B cell (primary cell): ENCODE measurements at regions of chr6 and their contacts with region 1.

Region 1: GRCh38 chr6:33075568-33076405 is at the start of gene HLA-DPB1:
- DNase-seq: peak; percentile 93
- ATAC-seq: peak; percentile 81
- H3K4me3 ChIP-seq: peak within 1 kb of the TSS; percentile 79 to 99 (median 97)
- H3K4me3 Mint-ChIP-seq: peak within 1 kb of the TSS; percentile 97
- H3K27ac ChIP-seq: peak within 1 kb of the TSS; percentile 96 to 99
- H3K27ac Mint-ChIP-seq: peak within 1 kb of the TSS; percentile 98
- H3K4me1 ChIP-seq: peaks cover 48 to 50% of the 10 kb centered on the region in 2 donors
- H3K4me1 Mint-ChIP-seq: peaks cover 60% of the 10 kb centered on the region
- H3K27me3 ChIP-seq: no peaks in the 10 kb centered on the region
- H3K27me3 Mint-ChIP-seq: no peaks in the 10 kb centered on the region
- CTCF ChIP-seq: no peak
- total RNA-seq, gene HLA-DPB1: 1,068 and 1,104 TPM in 2 replicates

Region 2: DNA sequence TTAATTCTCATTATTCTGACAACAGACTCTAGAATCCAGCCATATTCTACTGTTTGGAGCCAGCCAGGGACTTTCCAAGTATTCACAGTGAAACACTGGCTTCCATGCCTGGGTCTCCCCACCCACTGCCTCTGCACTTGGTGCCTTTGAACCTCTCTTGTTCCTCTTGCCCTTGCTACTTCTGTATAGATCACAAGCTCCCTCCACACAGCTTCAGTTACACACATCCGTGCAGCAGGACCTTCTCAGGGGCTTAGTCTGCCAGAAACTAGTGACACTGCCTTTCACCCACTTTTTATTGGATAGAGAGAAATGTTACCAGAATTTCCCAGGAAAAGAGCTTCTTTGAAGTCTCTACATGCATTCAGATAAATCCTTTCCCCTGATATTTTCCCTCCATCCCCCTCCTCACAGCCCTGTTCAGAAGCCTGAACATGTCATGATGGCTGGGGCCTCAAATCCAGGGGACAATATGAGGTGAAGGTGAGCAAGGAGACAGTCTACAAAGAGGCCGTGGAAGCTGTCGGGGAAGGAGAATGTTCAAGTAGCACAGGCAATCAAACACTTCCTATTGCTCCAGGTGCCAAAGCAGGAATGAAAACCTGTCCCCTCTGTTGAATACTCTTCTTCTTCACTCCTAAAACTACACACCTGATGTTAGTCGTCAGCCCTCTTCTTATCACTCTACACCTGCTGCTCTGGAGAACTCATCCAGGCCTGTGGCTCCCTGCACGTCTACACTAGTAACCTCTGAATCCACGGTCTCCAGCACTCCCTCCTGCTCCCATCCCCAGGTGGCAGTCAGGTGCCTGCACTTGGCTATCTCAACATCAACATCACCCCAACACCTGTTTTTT is 46.2 kb before region 1 on chr6:
- CTCF ChIA-PET with region 1: interaction called, 32 read pairs
- POLR2A ChIA-PET with region 1: interaction called, 136 read pairs
- intact Hi-C with region 1: loop called (anchors 1 kb)
- DNase-seq: peak; percentile 96
- ATAC-seq: peak; percentile 75
- H3K4me3 ChIP-seq: peak overlapping the region in 4 of 5 experiments; percentile 25 to 51 (median 33)
- H3K4me3 Mint-ChIP-seq: peak overlapping the region; percentile 71
- H3K27ac ChIP-seq: peak overlapping the region; percentile 99
- H3K27ac Mint-ChIP-seq: peak overlapping the region; percentile 99
- H3K4me1 ChIP-seq: peaks cover 45 to 54% of the 10 kb centered on the region in 2 donors
- H3K4me1 Mint-ChIP-seq: peaks cover 63% of the 10 kb centered on the region
- H3K27me3 ChIP-seq: no peaks in the 10 kb centered on the region
- H3K27me3 Mint-ChIP-seq: no peaks in the 10 kb centered on the region
- CTCF ChIP-seq: no peak

Region 3: DNA sequence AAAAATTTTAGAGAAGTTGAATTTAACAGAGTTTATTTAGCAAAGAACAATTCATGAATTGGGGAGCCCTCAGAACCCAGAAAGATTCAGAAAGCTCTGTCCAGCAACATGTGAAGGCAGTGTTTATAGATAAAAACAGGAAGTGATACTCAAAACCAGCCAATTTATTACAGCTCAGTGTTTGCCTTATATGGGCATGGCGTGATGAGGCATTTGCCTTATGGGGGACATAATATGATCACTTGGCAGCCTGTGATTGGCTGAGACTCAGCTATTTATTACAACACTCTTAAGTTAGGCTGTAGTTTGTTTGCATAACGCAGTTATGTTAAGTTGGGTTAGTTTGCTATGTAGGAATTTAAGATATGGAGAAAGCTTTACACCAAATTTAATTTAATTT is 13.8 kb before region 1 on chr6:
- CTCF ChIA-PET with region 1: interaction called, 4 read pairs
- POLR2A ChIA-PET with region 1: interaction called, 22 read pairs
- intact Hi-C with region 1: loop called (anchors 1 kb)
- DNase-seq: peak; percentile 85
- ATAC-seq: peak; percentile 70
- H3K4me3 ChIP-seq: peak overlapping the region in 1 of 5 experiments; percentile 6
- H3K4me3 Mint-ChIP-seq: peak overlapping the region; percentile 1
- H3K27ac ChIP-seq: peak overlapping the region in 1 of 2 donors; percentile 70
- H3K27ac Mint-ChIP-seq: peak overlapping the region; percentile 93
- H3K4me1 ChIP-seq: peaks cover 32 to 34% of the 10 kb centered on the region in 2 donors
- H3K4me1 Mint-ChIP-seq: peaks cover 44% of the 10 kb centered on the region
- H3K27me3 ChIP-seq: no peaks in the 10 kb centered on the region
- H3K27me3 Mint-ChIP-seq: no peaks in the 10 kb centered on the region
- CTCF ChIP-seq: no peak

Region 4: GRCh38 chr6:33112148-33112547 is 36.4 kb after region 1 on chr6:
- CTCF ChIA-PET with region 1: interaction called, 6 read pairs
- POLR2A ChIA-PET with region 1: interaction called, 5 read pairs
- intact Hi-C with region 1: loop called (anchors 5 kb)
- DNase-seq: peak; percentile 87
- ATAC-seq: peak; percentile 95
- H3K4me3 ChIP-seq: peak overlapping the region in 4 of 5 experiments; percentile 36 to 60 (median 47)
- H3K4me3 Mint-ChIP-seq: peak overlapping the region; percentile 71
- H3K27ac ChIP-seq: peak overlapping the region; percentile 80 to 88
- H3K27ac Mint-ChIP-seq: peak overlapping the region; percentile 87
- H3K4me1 ChIP-seq: peaks cover 50 to 54% of the 10 kb centered on the region in 2 donors
- H3K4me1 Mint-ChIP-seq: peaks cover 54% of the 10 kb centered on the region
- H3K27me3 ChIP-seq: no peaks in the 10 kb centered on the region
- H3K27me3 Mint-ChIP-seq: no peaks in the 10 kb centered on the region
- CTCF ChIP-seq: no peak